ENCODE measurements at regions of chr5 and their contacts with region 1.

Region 1: DNA sequence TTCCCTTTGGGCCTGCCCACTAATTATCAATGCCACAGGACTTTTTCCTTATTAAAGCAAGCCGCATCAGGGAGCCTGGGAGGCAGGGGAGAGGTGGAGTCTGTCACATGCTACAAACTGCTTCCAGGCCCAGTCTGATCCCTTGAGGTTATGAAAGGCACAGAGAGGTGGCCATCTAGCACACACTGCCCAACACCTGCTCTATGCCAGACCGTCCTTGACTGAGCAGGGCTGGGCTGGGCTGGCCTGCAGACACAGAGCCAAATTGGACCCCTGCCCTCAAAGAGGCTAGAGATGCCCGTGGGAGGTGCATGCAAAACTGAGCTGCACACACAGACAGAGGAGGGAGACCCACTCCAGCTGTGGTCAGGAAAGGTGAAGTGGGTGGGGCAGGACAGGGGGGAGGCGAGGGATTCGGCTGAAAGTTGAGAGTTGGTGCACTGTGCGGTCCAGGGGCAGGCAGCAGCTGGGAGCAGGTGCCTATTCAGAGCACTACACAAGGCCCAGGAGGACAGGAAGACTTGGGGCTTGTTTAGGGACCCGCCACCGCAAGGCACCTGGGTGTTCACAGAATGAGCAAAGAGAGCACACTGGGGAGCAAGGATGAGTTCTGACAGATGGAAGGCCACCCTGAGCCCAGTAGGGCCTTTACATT is 36.4 kb upstream of the TCF7 start:
- DNase-seq: no peak
- H3K4me3 Mint-ChIP-seq: no peak overlapping the region
- H3K27ac Mint-ChIP-seq: peak overlapping the region; percentile 53
- H3K4me1 Mint-ChIP-seq: peaks cover 45% of the 10 kb centered on the region
- H3K27me3 Mint-ChIP-seq: peaks cover 5% of the 10 kb centered on the region

Region 2: GRCh38 chr5:134041570-134042411 is 36.3 kb before region 1 on chr5:
- intact Hi-C with region 1: no loop called
- DNase-seq: no peak
- H3K4me3 Mint-ChIP-seq: no peak overlapping the region
- H3K27ac Mint-ChIP-seq: no peak overlapping the region
- H3K4me1 Mint-ChIP-seq: peaks cover 16% of the 10 kb centered on the region
- H3K27me3 Mint-ChIP-seq: peaks cover 11% of the 10 kb centered on the region

Region 3: DNA sequence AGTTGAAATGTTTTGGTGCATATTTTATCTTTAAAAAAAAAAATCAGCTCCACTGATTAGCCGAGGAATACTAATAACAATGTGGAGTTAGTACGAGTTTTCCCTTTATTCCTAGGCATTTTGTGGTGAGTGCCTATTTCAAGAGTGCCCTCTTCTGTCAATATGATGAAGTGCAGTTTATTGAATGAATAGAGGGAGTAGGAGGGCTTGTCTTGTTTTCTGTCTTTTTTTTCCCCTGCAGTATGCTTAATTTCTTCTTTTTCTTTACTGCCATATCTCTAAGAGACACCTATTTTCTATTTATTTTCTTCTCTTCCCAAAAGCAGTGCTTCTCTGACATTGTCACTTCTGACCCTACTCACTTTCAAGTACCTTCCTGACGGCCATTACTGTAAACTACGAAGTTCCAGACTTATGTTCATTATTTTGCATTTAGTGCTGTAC is 1125.6 kb after region 1 on chr5:
- intact Hi-C with region 1: loop called (anchors 5 kb)
- DNase-seq: no peak
- H3K4me3 Mint-ChIP-seq: no peak overlapping the region
- H3K27ac Mint-ChIP-seq: no peak overlapping the region
- H3K4me1 Mint-ChIP-seq: peaks cover 9% of the 10 kb centered on the region
- H3K27me3 Mint-ChIP-seq: peaks cover 23% of the 10 kb centered on the region

Measured in activated T-helper 1 cell treated with anti-CD3 and anti-CD28 coated beads, Interleukin-12 subunit alpha, Interleukin-12 subunit beta, Interleukin-2, Interleukin-4 antibody, amounts not matched to agents 30 ng/mL and 10 ng/mL and 1 ng/mL, durations not matched to agents 14 hours and 24 hours and 36 hours (primary cell).